ENCODE measurements at regions of chr6 and their contacts with region 1.

Region 1: GRCh38 chr6:116531675-116532570 is 13.6 kb downstream of the TRAPPC3L start:
- DNase-seq: peak; percentile 86
- H3K4me3 ChIP-seq: no peak overlapping the region
- H3K27ac ChIP-seq: no peak overlapping the region
- H3K4me1 ChIP-seq: peaks cover 16% of the 10 kb centered on the region
- H3K27me3 ChIP-seq: peaks cover 0 to 2% of the 10 kb centered on the region in 2 experiments
- CTCF ChIP-seq: peak; percentile 59 to 74
- POLR2A ChIP-seq: no peak

Region 2: GRCh38 chr6:115680621-115681020 is 851.3 kb before region 1 on chr6:
- CTCF ChIA-PET with region 1: no interaction called
- POLR2A ChIA-PET with region 1: no interaction called
- dilution Hi-C with region 1: no loop called
- intact Hi-C with region 1: no loop called
- DNase-seq: no peak
- H3K4me3 ChIP-seq: no peak overlapping the region
- H3K27ac ChIP-seq: no peak overlapping the region
- H3K4me1 ChIP-seq: no peaks in the 10 kb centered on the region
- H3K27me3 ChIP-seq: no peaks in the 10 kb centered on the region
- CTCF ChIP-seq: no peak
- POLR2A ChIP-seq: no peak

Region 3: GRCh38 chr6:116431964-116432595 is 99.8 kb before region 1 on chr6:
- CTCF ChIA-PET with region 1: no interaction called
- POLR2A ChIA-PET with region 1: no interaction called
- dilution Hi-C with region 1: no loop called
- intact Hi-C with region 1: no loop called
- DNase-seq: no peak
- H3K4me3 ChIP-seq: no peak overlapping the region
- H3K27ac ChIP-seq: no peak overlapping the region
- H3K4me1 ChIP-seq: no peaks in the 10 kb centered on the region
- H3K27me3 ChIP-seq: no peaks in the 10 kb centered on the region
- CTCF ChIP-seq: no peak
- POLR2A ChIP-seq: no peak

Region 4: GRCh38 chr6:116444092-116444491 is 87.8 kb before region 1 on chr6:
- CTCF ChIA-PET with region 1: interaction called, 5 read pairs
- POLR2A ChIA-PET with region 1: no interaction called
- dilution Hi-C with region 1: no loop called
- intact Hi-C with region 1: loop called (anchors 2 kb)
- DNase-seq: peak; percentile 44
- H3K4me3 ChIP-seq: no peak overlapping the region
- H3K27ac ChIP-seq: no peak overlapping the region
- H3K4me1 ChIP-seq: peaks cover 3% of the 10 kb centered on the region
- H3K27me3 ChIP-seq: no peaks in the 10 kb centered on the region
- CTCF ChIP-seq: peak; percentile 31 to 48
- POLR2A ChIP-seq: no peak

Region 5: GRCh38 chr6:116847227-116847626 is 315.3 kb after region 1 on chr6:
- CTCF ChIA-PET with region 1: interaction called, 15 read pairs
- POLR2A ChIA-PET with region 1: no interaction called
- dilution Hi-C with region 1: no loop called
- intact Hi-C with region 1: loop called (anchors 2 kb)
- DNase-seq: peak; percentile 36
- H3K4me3 ChIP-seq: no peak overlapping the region
- H3K27ac ChIP-seq: no peak overlapping the region
- H3K4me1 ChIP-seq: no peaks in the 10 kb centered on the region
- H3K27me3 ChIP-seq: no peaks in the 10 kb centered on the region
- CTCF ChIP-seq: peak in 1 of 2 donors; percentile 7
- POLR2A ChIP-seq: no peak